T-cell (primary cell): ENCODE measurements at regions of chr15 and their contacts with region 1.

Region 1: GRCh38 chr15:87849181-87849580 is 407.4 kb downstream of the NTRK3 start:
- DNase-seq: no peak
- ATAC-seq: no peak
- H3K4me3 ChIP-seq: no peak overlapping the region
- H3K4me3 Mint-ChIP-seq: no peak overlapping the region
- H3K27ac ChIP-seq: no peak overlapping the region
- H3K27ac Mint-ChIP-seq: no peak overlapping the region
- H3K4me1 ChIP-seq: no peaks in the 10 kb centered on the region
- H3K4me1 Mint-ChIP-seq: no peaks in the 10 kb centered on the region
- H3K27me3 ChIP-seq: no peaks in the 10 kb centered on the region
- H3K27me3 Mint-ChIP-seq: peaks cover 0 to 4% of the 10 kb centered on the region in 2 donors

Region 2: GRCh38 chr15:87860743-87861142 is 11.6 kb after region 1 on chr15:
- CTCF ChIA-PET with region 1: interaction called in 1 of 2 experiments, 10 read pairs
- POLR2A ChIA-PET with region 1: no interaction called
- DNase-seq: no peak
- ATAC-seq: no peak
- H3K4me3 ChIP-seq: no peak overlapping the region
- H3K4me3 Mint-ChIP-seq: no peak overlapping the region
- H3K27ac ChIP-seq: no peak overlapping the region
- H3K27ac Mint-ChIP-seq: no peak overlapping the region
- H3K4me1 ChIP-seq: no peaks in the 10 kb centered on the region
- H3K4me1 Mint-ChIP-seq: no peaks in the 10 kb centered on the region
- H3K27me3 ChIP-seq: no peaks in the 10 kb centered on the region
- H3K27me3 Mint-ChIP-seq: peaks cover 0 to 4% of the 10 kb centered on the region in 2 donors